Lower leg skin (tissue), 4 donors: ENCODE measurements at regions of chrX and their contacts with region 1.

Region 1: DNA sequence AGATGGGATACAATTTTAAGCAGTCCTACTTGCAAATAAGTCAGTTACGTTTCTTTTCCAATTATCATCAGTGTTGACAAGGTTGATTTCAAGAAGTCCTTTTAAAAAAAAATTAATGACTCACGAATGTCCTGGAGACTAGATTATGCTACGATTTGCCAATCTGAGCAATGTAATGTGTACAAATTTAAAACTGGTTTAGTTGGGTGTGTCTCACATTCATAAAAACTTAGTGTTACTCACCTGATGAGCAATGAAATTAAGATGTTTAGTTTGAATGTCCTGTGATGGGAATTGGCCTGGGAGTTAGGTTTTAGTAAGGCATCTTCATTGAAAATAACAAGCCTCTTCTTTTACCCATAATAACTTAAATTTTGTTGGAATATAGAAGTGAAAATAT is 136.7 kb upstream of the POF1B start:
- DNase-seq: no peak
- H3K4me3 ChIP-seq: no peak overlapping the region
- CTCF ChIP-seq: no peak
- POLR2A ChIP-seq: no peak

Region 2: DNA sequence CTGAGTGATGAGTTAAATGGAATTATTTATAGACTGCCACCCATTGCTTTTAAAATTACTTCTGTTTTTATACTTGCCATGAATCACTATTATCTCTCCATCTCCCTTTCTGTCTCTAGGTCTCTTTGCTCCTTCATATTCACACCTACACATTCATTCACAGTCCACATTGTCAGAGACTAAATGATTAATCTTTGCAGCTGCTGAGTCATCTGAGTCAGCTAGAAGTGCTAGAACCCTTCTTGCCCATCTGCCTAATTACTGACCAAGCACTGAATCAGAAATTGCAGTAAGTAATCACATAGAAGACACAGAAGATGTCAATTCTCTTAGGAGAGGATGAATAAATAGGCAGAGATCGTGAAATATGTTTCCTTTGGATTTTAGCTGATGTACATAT is 1296.6 kb before region 1 on chrX:
- intact Hi-C with region 1: no loop called
- DNase-seq: no peak
- H3K4me3 ChIP-seq: no peak overlapping the region
- CTCF ChIP-seq: no peak
- POLR2A ChIP-seq: no peak

Region 3: GRCh38 chrX:86141786-86142185 is 625.7 kb after region 1 on chrX:
- intact Hi-C with region 1: no loop called
- DNase-seq: no peak
- H3K4me3 ChIP-seq: no peak overlapping the region
- CTCF ChIP-seq: no peak
- POLR2A ChIP-seq: no peak

Region 4: GRCh38 chrX:87388381-87388780 is 1872.2 kb after region 1 on chrX:
- intact Hi-C with region 1: loop called (anchors 5 kb)
- DNase-seq: no peak
- H3K4me3 ChIP-seq: no peak overlapping the region
- CTCF ChIP-seq: no peak
- POLR2A ChIP-seq: no peak